ENCODE measurements at regions of chr3 and their contacts with region 1.

Region 1: GRCh38 chr3:58013973-58014649 is 5.9 kb downstream of the FLNB start:
- DNase-seq: no peak
- H3K4me3 ChIP-seq: no peak overlapping the region
- H3K27ac ChIP-seq: peak overlapping the region in 1 of 5 donors; percentile 30
- H3K4me1 ChIP-seq: peaks cover 31 to 52% of the 10 kb centered on the region in 2 donors
- H3K27me3 ChIP-seq: no peaks in the 10 kb centered on the region
- CTCF ChIP-seq: no peak
- POLR2A ChIP-seq: no peak

Region 2: DNA sequence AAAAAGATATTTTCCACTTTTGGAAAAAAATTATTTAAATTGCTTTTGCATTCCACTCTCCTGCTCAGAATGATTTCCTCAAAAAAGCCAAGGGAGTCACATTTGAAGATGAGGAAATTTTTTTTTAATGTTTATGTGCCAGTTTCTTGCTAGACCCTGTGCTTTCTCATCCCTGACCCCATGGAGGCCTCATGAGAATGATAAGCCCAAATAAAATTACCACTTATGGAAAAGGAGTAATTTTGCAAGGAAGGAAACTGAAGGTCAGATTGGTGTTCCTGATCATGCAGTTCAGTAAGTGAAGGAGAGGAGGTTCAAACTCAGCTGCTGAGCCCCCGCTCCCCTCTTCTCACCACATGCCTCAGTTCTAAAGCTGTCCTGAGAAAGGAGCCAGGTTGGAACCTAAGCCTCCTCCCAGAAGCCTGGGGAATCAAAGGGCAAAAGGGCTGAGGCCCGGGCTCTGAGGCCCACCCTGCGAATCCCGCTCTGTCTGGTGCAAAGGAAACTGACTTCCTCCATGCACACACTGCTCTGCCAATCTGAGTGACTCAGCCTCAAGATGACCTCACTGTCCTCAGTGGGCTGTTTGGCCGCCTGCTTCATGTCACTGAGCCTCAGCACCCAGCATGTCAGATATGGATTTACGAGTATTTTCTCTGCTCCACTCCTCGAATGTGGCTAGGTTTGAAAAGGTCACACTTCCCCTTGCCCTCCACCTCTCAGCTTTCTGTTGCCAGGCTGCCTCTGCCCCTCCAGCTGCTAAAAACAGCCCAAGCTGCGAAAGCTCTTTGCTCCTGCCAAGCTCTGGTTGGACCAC is 62.8 kb before region 1 on chr3:
- intact Hi-C with region 1: no loop called
- DNase-seq: peak; percentile 69 to 93 (median 82)
- H3K4me3 ChIP-seq: no peak overlapping the region
- H3K27ac ChIP-seq: peak overlapping the region; percentile 1 to 89 (median 74)
- H3K4me1 ChIP-seq: peaks cover 18 to 19% of the 10 kb centered on the region in 2 donors
- H3K27me3 ChIP-seq: no peaks in the 10 kb centered on the region
- CTCF ChIP-seq: no peak
- POLR2A ChIP-seq: peak in 1 of 2 donors; percentile 56

Region 3: DNA sequence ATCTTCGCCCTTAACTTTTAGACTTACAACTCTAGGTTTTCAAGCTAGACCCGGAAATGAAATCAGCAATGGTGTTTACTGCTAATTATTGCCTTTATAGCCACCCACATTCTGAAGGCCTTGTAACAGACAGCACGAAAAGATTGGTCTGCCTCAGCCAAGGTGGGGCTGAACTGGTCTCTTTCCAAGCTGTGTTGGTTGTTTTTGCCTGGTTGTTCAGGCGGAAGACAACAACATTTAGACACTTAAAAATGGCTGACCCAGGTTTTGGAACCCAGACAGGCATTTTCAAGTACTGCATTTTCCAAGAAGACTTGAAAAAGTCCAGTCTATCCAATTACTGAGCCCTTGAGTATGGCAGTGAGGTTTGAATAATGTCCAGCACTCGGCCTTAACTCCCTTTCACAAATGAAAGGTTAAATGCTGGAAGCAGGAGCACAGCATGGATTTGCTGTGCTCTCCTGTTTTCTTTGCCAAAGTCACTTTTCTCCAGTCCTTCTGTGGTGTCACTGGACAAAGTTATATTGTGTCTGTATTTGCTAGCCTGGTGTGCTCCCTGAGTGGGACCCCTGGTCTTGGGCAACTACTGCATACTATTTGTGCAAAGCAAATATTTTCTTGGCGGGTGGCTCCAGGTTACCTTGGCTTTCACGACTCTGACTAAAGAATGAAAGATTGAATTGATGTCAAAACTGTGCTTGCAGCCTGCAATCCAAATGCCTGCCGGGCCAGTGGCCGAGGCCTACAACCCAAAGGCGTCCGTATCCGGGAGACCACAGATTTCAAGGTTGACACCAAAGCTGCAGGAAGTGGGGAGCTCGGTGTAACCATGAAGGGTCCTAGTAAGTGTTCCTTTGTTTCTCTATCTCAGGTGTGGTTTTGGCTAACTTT is 87.6 kb after region 1 on chr3:
- intact Hi-C with region 1: loop called in 1 of 2 experiments (anchors 10 kb)
- DNase-seq: peak in 5 of 7 donors; percentile 28 to 61 (median 52)
- H3K4me3 ChIP-seq: no peak overlapping the region
- H3K27ac ChIP-seq: peak overlapping the region; percentile 35 to 93 (median 87)
- H3K4me1 ChIP-seq: peaks cover 11 to 29% of the 10 kb centered on the region in 2 donors
- H3K27me3 ChIP-seq: no peaks in the 10 kb centered on the region
- CTCF ChIP-seq: no peak
- POLR2A ChIP-seq: no peak

Region 4: GRCh38 chr3:58317811-58318210 is 303.7 kb after region 1 on chr3:
- intact Hi-C with region 1: no loop called
- DNase-seq: no peak
- H3K4me3 ChIP-seq: no peak overlapping the region
- H3K27ac ChIP-seq: no peak overlapping the region
- H3K4me1 ChIP-seq: no peaks in the 10 kb centered on the region
- H3K27me3 ChIP-seq: no peaks in the 10 kb centered on the region
- CTCF ChIP-seq: no peak
- POLR2A ChIP-seq: no peak

Measured in adrenal gland (tissue), 19 donors.